Natural killer cell (primary cell): ENCODE measurements at regions of chr2 and their contacts with region 1.

Region 1: GRCh38 chr2:10072656-10073480 is 7.3 kb downstream of the CYS1 start:
- DNase-seq: peak; percentile 69 to 93
- ATAC-seq: peak; percentile 93 to 99 (median 97)
- H3K4me3 ChIP-seq: no peak overlapping the region
- H3K4me3 Mint-ChIP-seq: no peak overlapping the region
- H3K27ac ChIP-seq: no peak overlapping the region
- H3K27ac Mint-ChIP-seq: no peak overlapping the region
- H3K4me1 ChIP-seq: peaks cover 3% of the 10 kb centered on the region
- H3K4me1 Mint-ChIP-seq: peaks cover 0 to 12% of the 10 kb centered on the region in 2 donors
- H3K27me3 ChIP-seq: peaks cover 7% of the 10 kb centered on the region
- H3K27me3 Mint-ChIP-seq: peaks cover 35 to 38% of the 10 kb centered on the region in 2 donors
- CTCF ChIP-seq: peak; percentile 76

Region 2: GRCh38 chr2:10097352-10098148 is 24.7 kb after region 1 on chr2:
- intact Hi-C with region 1: loop called (anchors 1 kb)
- DNase-seq: peak; percentile 27 to 60
- ATAC-seq: peak; percentile 60 to 79 (median 72)
- H3K4me3 ChIP-seq: no peak overlapping the region
- H3K4me3 Mint-ChIP-seq: no peak overlapping the region
- H3K27ac ChIP-seq: no peak overlapping the region
- H3K27ac Mint-ChIP-seq: no peak overlapping the region
- H3K4me1 ChIP-seq: no peaks in the 10 kb centered on the region
- H3K4me1 Mint-ChIP-seq: peaks cover 1 to 7% of the 10 kb centered on the region in 2 donors
- H3K27me3 ChIP-seq: peaks cover 7% of the 10 kb centered on the region
- H3K27me3 Mint-ChIP-seq: peaks cover 9 to 13% of the 10 kb centered on the region in 2 donors
- CTCF ChIP-seq: peak; percentile 77

Region 3: DNA sequence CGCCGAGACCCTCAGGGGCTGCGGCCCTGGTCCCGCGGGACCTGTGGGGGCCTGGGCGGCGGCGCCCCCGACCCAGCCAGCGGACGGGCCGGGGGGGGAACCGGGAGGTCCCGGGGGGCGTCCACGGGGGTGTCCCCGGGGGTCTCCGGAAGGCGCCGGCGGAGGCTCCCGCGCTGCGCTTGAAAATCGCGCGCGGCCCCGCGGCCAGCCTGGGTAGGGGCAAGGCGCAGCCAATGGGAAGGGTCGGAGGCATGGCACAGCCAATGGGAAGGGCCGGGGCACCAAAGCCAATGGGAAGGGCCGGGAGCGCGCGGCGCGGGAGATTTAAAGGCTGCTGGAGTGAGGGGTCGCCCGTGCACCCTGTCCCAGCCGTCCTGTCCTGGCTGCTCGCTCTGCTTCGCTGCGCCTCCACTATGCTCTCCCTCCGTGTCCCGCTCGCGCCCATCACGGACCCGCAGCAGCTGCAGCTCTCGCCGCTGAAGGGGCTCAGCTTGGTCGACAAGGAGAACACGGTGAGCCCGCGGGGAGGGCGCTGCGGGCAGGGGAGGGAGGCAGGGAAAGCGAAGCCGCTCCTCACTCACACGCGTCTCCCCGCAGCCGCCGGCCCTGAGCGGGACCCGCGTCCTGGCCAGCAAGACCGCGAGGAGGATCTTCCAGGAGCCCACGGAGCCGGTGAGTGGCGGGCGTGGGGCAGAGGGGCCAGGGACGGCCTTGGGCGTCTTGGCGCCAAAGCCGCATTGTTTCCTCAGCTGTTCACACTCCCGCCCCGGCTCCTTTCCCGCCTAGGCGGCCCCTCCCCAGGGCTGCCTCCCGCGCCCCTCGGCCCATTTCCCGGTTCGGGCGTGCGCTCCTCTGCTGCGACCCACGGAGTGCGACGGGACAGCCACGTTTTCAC is 49.8 kb after region 1 on chr2 and contains the start of gene RRM2:
- intact Hi-C with region 1: loop called (anchors 2 kb)
- DNase-seq: peak; percentile 86 to 93
- ATAC-seq: peak; percentile 73 to 87 (median 78)
- H3K4me3 ChIP-seq: peak within 1 kb of the TSS; percentile 44
- H3K4me3 Mint-ChIP-seq: peak within 1 kb of the TSS; percentile 97
- H3K27ac ChIP-seq: no peak within 1 kb of the TSS
- H3K27ac Mint-ChIP-seq: peak within 1 kb of the TSS; percentile 89 to 92
- H3K4me1 ChIP-seq: peaks cover 55% of the 10 kb centered on the region
- H3K4me1 Mint-ChIP-seq: peaks cover 50 to 54% of the 10 kb centered on the region in 2 donors
- H3K27me3 ChIP-seq: peaks cover 3% of the 10 kb centered on the region
- H3K27me3 Mint-ChIP-seq: no peaks in the 10 kb centered on the region
- CTCF ChIP-seq: no peak
- total RNA-seq, gene RRM2: 16.1 to 22.1 (median 18.5) TPM

Region 4: DNA sequence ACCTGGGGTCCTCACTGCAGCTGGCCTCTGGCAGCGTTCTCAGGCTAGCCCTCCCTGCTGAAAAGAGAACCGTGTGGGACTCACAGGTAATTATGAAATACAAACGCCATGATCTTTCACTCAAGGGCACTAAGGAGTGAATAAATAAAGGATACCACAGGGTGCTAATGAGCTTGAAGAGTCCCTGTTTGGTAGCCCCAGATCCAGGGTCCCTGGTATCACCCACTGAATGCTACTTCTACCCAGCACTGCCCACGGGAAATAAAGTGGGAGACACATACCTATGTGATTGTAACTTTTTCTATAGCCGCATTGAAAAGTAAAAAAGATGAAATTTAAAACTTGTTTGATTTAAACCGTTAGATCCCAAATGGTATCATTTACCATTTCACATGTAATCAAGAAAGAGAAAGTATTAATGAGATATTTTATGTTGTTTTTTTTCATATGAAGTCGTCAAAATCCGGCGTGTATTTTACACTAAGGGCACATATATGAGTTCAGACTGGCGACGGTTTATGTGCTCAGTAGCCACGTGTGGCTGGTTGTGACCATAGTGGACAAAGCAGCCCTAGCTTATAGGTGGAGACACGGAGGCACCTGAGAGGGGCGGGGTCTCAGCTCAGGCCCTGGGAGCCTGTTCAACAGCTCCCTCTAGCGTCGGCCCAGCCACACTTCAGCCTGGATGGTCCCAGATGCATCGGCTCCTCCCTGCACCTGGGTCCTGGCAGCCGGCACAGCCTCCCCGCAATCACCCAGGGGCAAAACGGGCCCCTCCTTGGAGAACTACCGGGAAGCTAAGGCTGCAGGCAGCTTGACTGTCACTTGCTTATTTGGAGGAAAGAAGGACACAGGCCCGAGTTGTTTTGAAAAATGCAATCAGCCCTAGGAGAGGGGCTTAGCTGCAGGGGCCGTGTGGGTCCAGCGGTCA is 336.0 kb after region 1 on chr2:
- intact Hi-C with region 1: loop called (anchors 1 kb)
- DNase-seq: peak; percentile 71 to 93
- ATAC-seq: peak; percentile 76 to 91 (median 86)
- H3K4me3 ChIP-seq: no peak overlapping the region
- H3K4me3 Mint-ChIP-seq: peak overlapping the region; percentile 95
- H3K27ac ChIP-seq: peak overlapping the region; percentile 58
- H3K27ac Mint-ChIP-seq: peak overlapping the region; percentile 90 to 91
- H3K4me1 ChIP-seq: peaks cover 47% of the 10 kb centered on the region
- H3K4me1 Mint-ChIP-seq: peaks cover 35 to 37% of the 10 kb centered on the region in 2 donors
- H3K27me3 ChIP-seq: no peaks in the 10 kb centered on the region
- H3K27me3 Mint-ChIP-seq: no peaks in the 10 kb centered on the region
- CTCF ChIP-seq: peak; percentile 95

Region 5: GRCh38 chr2:10434886-10435819 is 362.3 kb after region 1 on chr2:
- intact Hi-C with region 1: loop called (anchors 1 kb)
- DNase-seq: peak; percentile 72 to 87
- ATAC-seq: peak; percentile 83 to 88 (median 85)
- H3K4me3 ChIP-seq: no peak overlapping the region
- H3K4me3 Mint-ChIP-seq: no peak overlapping the region
- H3K27ac ChIP-seq: no peak overlapping the region
- H3K27ac Mint-ChIP-seq: no peak overlapping the region
- H3K4me1 ChIP-seq: peaks cover 17% of the 10 kb centered on the region
- H3K4me1 Mint-ChIP-seq: peaks cover 6 to 21% of the 10 kb centered on the region in 2 donors
- H3K27me3 ChIP-seq: no peaks in the 10 kb centered on the region
- H3K27me3 Mint-ChIP-seq: peaks cover 8 to 22% of the 10 kb centered on the region in 2 donors
- CTCF ChIP-seq: peak; percentile 85

Region 6: GRCh38 chr2:10668402-10669012 is 595.6 kb after region 1 on chr2:
- intact Hi-C with region 1: loop called (anchors 1 kb)
- DNase-seq: peak in 1 of 2 donors; percentile 83
- ATAC-seq: peak in 2 of 3 donors; percentile 74 to 75
- H3K4me3 ChIP-seq: no peak overlapping the region
- H3K4me3 Mint-ChIP-seq: no peak overlapping the region
- H3K27ac ChIP-seq: no peak overlapping the region
- H3K27ac Mint-ChIP-seq: no peak overlapping the region
- H3K4me1 ChIP-seq: no peaks in the 10 kb centered on the region
- H3K4me1 Mint-ChIP-seq: no peaks in the 10 kb centered on the region
- H3K27me3 ChIP-seq: no peaks in the 10 kb centered on the region
- H3K27me3 Mint-ChIP-seq: no peaks in the 10 kb centered on the region
- CTCF ChIP-seq: peak; percentile 84